ENCODE measurements at regions of chr15 and their contacts with region 1.

Region 1: DNA sequence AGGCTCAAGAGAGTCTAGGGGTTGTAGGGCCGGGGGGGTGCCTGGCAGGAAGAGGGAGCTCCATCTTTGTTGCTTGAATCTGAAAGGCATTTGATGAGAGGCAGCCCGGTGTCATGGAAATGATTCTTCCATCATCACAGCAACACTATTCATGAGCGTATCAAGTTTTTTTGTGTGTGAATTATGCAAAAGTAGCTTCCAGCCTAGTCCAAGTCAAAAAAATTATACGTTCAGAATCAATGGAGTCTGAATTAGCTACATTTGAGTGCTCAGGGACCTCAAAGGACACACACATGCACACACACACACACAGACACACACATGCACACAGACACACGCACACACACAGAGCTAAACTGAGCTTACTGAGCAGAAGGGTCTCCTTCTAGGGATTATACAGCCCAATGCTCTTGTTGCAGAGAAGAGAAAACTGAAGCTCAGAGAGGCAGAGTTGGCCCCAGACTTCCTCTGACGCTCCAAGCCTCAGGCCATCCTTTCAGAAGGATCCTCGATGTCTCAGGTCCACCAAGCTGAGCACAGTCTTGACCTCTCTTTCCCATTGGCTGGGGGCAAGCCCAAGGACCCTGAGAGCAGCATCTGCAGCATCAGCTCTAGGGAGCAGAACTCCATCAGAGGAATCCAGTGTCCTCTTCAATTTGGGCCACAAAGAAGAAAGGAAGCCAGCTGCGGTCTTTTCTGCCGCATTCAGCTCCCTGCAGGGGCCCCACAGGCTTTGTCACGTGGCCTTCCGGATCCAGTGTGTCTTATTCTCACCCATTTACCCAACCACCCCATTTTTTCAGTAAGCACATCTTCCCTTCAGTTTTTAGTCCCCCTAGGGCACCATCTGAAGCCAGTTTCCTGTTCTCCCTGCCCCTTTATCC is 228.0 kb downstream of the UACA start:
- DNase-seq: peak; percentile 41 to 85 (median 69)
- ATAC-seq: peak; percentile 84 to 88
- H3K4me3 Mint-ChIP-seq: peak overlapping the region; percentile 83 to 96 (median 91)
- H3K27ac Mint-ChIP-seq: peak overlapping the region; percentile 84 to 98 (median 95)
- H3K4me1 Mint-ChIP-seq: peaks cover 36 to 83% (median 75%) of the 10 kb centered on the region in 4 donors
- H3K27me3 Mint-ChIP-seq: no peaks in the 10 kb centered on the region

Region 2: DNA sequence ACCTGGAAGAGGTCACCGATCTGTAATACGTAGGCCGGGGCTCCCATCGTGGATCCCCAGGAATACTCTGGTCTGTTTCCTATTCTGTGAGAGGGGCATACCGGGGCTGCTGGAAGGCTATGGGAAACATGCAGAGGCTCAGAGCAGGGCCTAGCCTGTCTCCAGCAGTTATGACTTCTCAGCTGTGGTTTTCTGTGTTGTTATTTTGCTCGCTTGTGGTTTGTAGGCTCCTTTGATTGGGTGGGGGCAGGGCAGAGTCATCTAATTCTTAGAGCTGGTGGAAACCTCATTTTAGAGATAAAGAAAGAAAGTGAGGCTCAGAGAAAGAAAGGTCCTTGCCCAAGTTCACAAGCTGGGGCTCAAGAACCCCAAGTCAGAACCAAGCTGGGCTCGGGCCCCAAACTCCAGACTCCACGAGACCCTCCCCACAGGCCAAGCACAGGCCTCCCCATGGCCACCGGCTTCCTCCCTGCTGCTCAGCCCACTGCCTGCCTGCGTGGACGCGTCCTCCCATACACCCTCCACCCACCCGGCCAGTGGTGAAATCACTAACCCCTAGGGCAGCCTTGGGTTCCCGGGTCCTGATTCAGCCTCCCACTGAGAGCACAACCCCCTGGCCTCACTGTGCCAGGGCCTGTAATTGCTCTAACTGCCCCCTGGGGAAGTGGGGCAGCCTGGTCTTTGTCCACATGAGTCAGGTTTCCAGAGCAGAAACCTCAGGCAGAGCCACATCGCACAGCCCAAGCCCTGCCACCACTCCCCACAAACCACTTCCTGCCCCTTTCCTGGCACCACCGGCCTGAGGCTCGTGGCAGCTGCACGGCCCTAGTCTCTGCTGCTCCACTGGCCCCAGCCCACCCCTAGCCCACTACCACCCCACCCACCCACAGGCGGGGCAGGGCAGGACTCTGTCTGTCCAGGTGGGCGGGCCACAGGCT is 42.8 kb before region 1 on chr15:
- POLR2A ChIA-PET with region 1: interaction called, 12 read pairs
- DNase-seq: peak; percentile 37 to 89 (median 77)
- ATAC-seq: peak; percentile 78 to 90
- H3K4me3 Mint-ChIP-seq: peak overlapping the region; percentile 61 to 90 (median 76)
- H3K27ac Mint-ChIP-seq: peak overlapping the region; percentile 9 to 92 (median 78)
- H3K4me1 Mint-ChIP-seq: peaks cover 59 to 87% (median 82%) of the 10 kb centered on the region in 4 donors
- H3K27me3 Mint-ChIP-seq: peaks cover 0 to 6% (median 0%) of the 10 kb centered on the region in 5 donors

Region 3: DNA sequence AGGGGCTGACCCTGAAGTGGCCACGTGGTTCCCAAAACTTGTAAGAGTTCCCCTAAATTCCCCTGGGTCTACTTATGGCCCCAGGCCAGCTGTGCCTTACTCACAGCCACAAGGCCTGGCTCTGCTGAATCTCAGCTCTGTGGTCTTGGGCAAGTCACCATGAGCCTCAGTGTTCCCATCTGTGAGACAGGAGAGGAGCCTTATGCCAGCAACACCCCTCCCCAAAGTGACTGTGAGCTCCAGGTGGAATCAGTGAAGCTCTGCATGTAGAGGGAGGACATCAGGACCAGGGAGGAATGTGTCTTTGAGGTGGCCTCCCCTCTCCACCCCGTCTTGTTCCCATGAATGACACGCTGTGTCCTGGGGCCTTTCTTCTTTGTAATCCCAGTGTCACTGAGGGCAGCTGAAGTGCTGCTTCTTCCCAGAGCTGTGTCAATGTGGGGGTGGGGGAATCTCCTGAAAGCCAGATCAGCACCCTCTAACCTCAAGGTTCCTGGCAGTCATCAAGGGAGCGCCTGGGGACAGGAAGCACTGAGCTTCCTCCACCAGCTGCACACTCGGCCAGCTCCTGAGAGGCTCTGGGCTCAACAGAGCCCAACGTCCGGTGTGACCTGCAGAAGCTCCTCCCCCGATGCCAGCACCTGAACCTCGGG is 30.9 kb before region 1 on chr15:
- POLR2A ChIA-PET with region 1: interaction called, 14 read pairs
- DNase-seq: no peak
- ATAC-seq: peak; percentile 58 to 61
- H3K4me3 Mint-ChIP-seq: peak overlapping the region; percentile 22 to 85 (median 64)
- H3K27ac Mint-ChIP-seq: peak overlapping the region in 4 of 10 donors; percentile 22 to 82 (median 74)
- H3K4me1 Mint-ChIP-seq: peaks cover 23 to 66% (median 52%) of the 10 kb centered on the region in 4 donors
- H3K27me3 Mint-ChIP-seq: no peaks in the 10 kb centered on the region

Region 4: GRCh38 chr15:70546903-70547302 is 11.6 kb after region 1 on chr15:
- POLR2A ChIA-PET with region 1: interaction called, 10 read pairs
- DNase-seq: no peak
- ATAC-seq: no peak
- H3K4me3 Mint-ChIP-seq: no peak overlapping the region
- H3K27ac Mint-ChIP-seq: no peak overlapping the region
- H3K4me1 Mint-ChIP-seq: peaks cover 8 to 26% (median 14%) of the 10 kb centered on the region in 4 donors
- H3K27me3 Mint-ChIP-seq: no peaks in the 10 kb centered on the region

Region 5: DNA sequence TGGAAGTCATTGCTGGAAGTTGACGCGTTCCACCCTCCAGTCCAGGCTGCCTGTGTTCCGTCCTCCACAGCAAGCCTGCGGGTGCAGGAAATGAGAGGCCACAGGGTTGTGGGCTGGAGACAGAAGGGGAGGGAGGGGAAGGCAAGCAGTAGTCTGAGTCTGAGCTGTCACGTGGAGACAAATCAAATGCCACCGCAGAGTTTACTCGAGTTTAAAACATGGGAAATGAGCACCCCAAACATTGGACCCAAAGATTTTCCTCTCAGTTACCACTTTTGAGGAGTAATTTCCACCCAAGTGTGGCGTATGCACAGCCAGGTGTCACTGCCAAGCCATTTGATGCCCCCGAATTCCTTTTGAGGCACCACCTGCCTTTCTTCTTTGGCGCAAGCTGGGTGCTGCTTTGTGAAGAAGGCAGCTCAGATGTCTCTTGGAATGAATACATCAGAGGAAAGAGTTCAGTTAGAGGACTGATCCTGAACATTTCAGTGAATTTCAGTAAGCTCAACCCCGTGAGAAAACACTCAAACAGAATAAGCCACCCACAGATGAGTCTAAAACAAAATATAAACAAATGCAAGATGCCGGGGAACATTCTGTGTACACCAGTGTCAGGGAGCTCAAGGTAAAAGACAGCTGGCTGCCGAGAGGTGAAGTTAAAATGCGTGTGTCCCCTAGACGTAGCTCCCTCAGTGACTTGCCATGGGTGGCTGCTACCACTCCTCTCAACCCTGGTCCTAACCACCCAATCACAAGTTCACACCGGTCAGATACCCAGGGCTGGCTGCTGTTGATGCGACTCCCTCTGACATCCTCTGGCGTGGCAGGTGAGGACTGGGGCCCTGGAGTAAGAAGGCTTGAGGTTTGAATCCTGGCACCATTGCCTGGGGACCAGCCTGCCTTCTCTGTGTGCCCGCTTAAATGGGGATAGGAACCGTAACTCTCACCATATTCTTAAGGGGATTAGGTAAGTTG is 24.2 kb after region 1 on chr15:
- POLR2A ChIA-PET with region 1: interaction called, 55 read pairs
- DNase-seq: peak; percentile 37 to 87 (median 70)
- ATAC-seq: peak; percentile 88 to 90
- H3K4me3 Mint-ChIP-seq: no peak overlapping the region
- H3K27ac Mint-ChIP-seq: no peak overlapping the region
- H3K4me1 Mint-ChIP-seq: peaks cover 0 to 29% (median 15%) of the 10 kb centered on the region in 4 donors
- H3K27me3 Mint-ChIP-seq: peaks cover 0 to 4% (median 0%) of the 10 kb centered on the region in 5 donors

Measured in naive thymus-derived CD8-positive, alpha-beta T cell (primary cell).